Activated CD4-positive, alpha-beta T cell treated with anti-CD3 and anti-CD28 coated beads, Interleukin-2, amount 10 ng/mL, durations not matched to agents 7 days and 5 days (primary cell): ENCODE measurements at regions of chr4 and their contacts with region 1.

Region 1: GRCh38 chr4:56799824-56800756 is 21.4 kb downstream of the SPINK2 start:
- DNase-seq: peak; percentile 89
- H3K4me3 Mint-ChIP-seq: peak overlapping the region; percentile 78
- H3K27ac Mint-ChIP-seq: peak overlapping the region; percentile 71
- H3K4me1 Mint-ChIP-seq: peaks cover 38% of the 10 kb centered on the region
- H3K27me3 Mint-ChIP-seq: no peaks in the 10 kb centered on the region

Region 2: GRCh38 chr4:56544573-56545131 is 255.4 kb before region 1 on chr4:
- CTCF ChIA-PET with region 1: interaction called, 3 read pairs
- POLR2A ChIA-PET with region 1: interaction called, 10 read pairs
- DNase-seq: peak; percentile 81
- H3K4me3 Mint-ChIP-seq: peak overlapping the region; percentile 58
- H3K27ac Mint-ChIP-seq: no peak overlapping the region
- H3K4me1 Mint-ChIP-seq: peaks cover 17% of the 10 kb centered on the region
- H3K27me3 Mint-ChIP-seq: no peaks in the 10 kb centered on the region